Caco-2 (cell line): ENCODE measurements at regions of chr4 and their contacts with region 1.

Region 1: GRCh38 chr4:89434364-89434988 is 126.9 kb upstream of the GPRIN3 start:
- DNase-seq: peak in 1 of 2 experiments; percentile 2
- H3K4me3 ChIP-seq: no peak overlapping the region
- H3K4me3 Mint-ChIP-seq: no peak overlapping the region
- H3K27ac Mint-ChIP-seq: no peak overlapping the region
- H3K4me1 ChIP-seq: no peaks in the 10 kb centered on the region
- H3K4me1 Mint-ChIP-seq: no peaks in the 10 kb centered on the region
- H3K27me3 ChIP-seq: no peaks in the 10 kb centered on the region
- H3K27me3 Mint-ChIP-seq: peaks cover 12% of the 10 kb centered on the region
- CTCF ChIP-seq: peak; percentile 57 to 62

Region 2: GRCh38 chr4:89158884-89159503 is 275.5 kb before region 1 on chr4:
- CTCF ChIA-PET with region 1: no interaction called
- POLR2A ChIA-PET with region 1: no interaction called
- intact Hi-C with region 1: loop called (anchors 1 kb)
- DNase-seq: peak in 1 of 2 experiments; percentile 41
- H3K4me3 ChIP-seq: no peak overlapping the region
- H3K4me3 Mint-ChIP-seq: no peak overlapping the region
- H3K27ac Mint-ChIP-seq: no peak overlapping the region
- H3K4me1 ChIP-seq: no peaks in the 10 kb centered on the region
- H3K4me1 Mint-ChIP-seq: peaks cover 6% of the 10 kb centered on the region
- H3K27me3 ChIP-seq: no peaks in the 10 kb centered on the region
- H3K27me3 Mint-ChIP-seq: no peaks in the 10 kb centered on the region
- CTCF ChIP-seq: peak; percentile 64 to 69

Region 3: GRCh38 chr4:89164400-89164799 is 270.1 kb before region 1 on chr4:
- CTCF ChIA-PET with region 1: no interaction called
- POLR2A ChIA-PET with region 1: no interaction called
- intact Hi-C with region 1: loop called (anchors 1 kb)
- DNase-seq: no peak
- H3K4me3 ChIP-seq: no peak overlapping the region
- H3K4me3 Mint-ChIP-seq: no peak overlapping the region
- H3K27ac Mint-ChIP-seq: no peak overlapping the region
- H3K4me1 ChIP-seq: no peaks in the 10 kb centered on the region
- H3K4me1 Mint-ChIP-seq: no peaks in the 10 kb centered on the region
- H3K27me3 ChIP-seq: no peaks in the 10 kb centered on the region
- H3K27me3 Mint-ChIP-seq: no peaks in the 10 kb centered on the region
- CTCF ChIP-seq: no peak

Region 4: GRCh38 chr4:89226665-89227574 is 207.6 kb before region 1 on chr4:
- CTCF ChIA-PET with region 1: no interaction called
- POLR2A ChIA-PET with region 1: no interaction called
- intact Hi-C with region 1: loop called (anchors 1 kb)
- DNase-seq: peak; percentile 77 to 78
- H3K4me3 ChIP-seq: no peak overlapping the region
- H3K4me3 Mint-ChIP-seq: no peak overlapping the region
- H3K27ac Mint-ChIP-seq: no peak overlapping the region
- H3K4me1 ChIP-seq: peaks cover 7% of the 10 kb centered on the region; the same call in 1 of the 2 replicates
- H3K4me1 Mint-ChIP-seq: no peaks in the 10 kb centered on the region
- H3K27me3 ChIP-seq: no peaks in the 10 kb centered on the region
- H3K27me3 Mint-ChIP-seq: no peaks in the 10 kb centered on the region
- CTCF ChIP-seq: peak; percentile 43 to 70

Region 5: GRCh38 chr4:89242864-89243732 is 191.4 kb before region 1 on chr4:
- CTCF ChIA-PET with region 1: no interaction called
- POLR2A ChIA-PET with region 1: no interaction called
- intact Hi-C with region 1: no loop called
- DNase-seq: no peak
- H3K4me3 ChIP-seq: no peak overlapping the region
- H3K4me3 Mint-ChIP-seq: no peak overlapping the region
- H3K27ac Mint-ChIP-seq: no peak overlapping the region
- H3K4me1 ChIP-seq: no peaks in the 10 kb centered on the region
- H3K4me1 Mint-ChIP-seq: no peaks in the 10 kb centered on the region
- H3K27me3 ChIP-seq: no peaks in the 10 kb centered on the region
- H3K27me3 Mint-ChIP-seq: no peaks in the 10 kb centered on the region
- CTCF ChIP-seq: no peak

Region 6: DNA sequence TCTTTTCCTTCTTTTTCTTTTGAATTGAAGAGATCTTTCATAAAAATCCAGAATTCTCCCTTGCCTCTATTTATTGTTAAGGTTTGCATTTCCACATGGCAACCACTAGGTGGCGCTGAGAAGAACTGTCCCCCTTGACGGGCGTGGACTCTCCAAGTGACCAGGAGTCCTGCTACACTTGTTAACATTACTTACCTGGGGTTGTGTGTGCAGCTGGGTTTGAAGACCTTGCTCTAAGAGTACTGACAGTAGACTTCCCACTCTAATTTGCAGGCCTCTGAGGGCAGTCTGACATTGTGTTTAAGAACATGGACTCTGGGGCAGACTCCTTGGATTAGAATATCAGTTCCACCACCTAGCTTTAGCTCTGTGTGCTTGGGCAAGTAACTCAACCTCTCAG is 179.6 kb before region 1 on chr4:
- CTCF ChIA-PET with region 1: no interaction called
- POLR2A ChIA-PET with region 1: no interaction called
- intact Hi-C with region 1: loop called (anchors 10 kb)
- DNase-seq: peak in 1 of 2 experiments; percentile 29
- H3K4me3 ChIP-seq: no peak overlapping the region
- H3K4me3 Mint-ChIP-seq: no peak overlapping the region
- H3K27ac Mint-ChIP-seq: no peak overlapping the region
- H3K4me1 ChIP-seq: no peaks in the 10 kb centered on the region
- H3K4me1 Mint-ChIP-seq: no peaks in the 10 kb centered on the region
- H3K27me3 ChIP-seq: no peaks in the 10 kb centered on the region
- H3K27me3 Mint-ChIP-seq: peaks cover 7% of the 10 kb centered on the region
- CTCF ChIP-seq: peak; percentile 70 to 72

Region 7: GRCh38 chr4:89410687-89411086 is 23.8 kb before region 1 on chr4:
- CTCF ChIA-PET with region 1: no interaction called
- POLR2A ChIA-PET with region 1: no interaction called
- intact Hi-C with region 1: no loop called
- DNase-seq: no peak
- H3K4me3 ChIP-seq: no peak overlapping the region
- H3K4me3 Mint-ChIP-seq: no peak overlapping the region
- H3K27ac Mint-ChIP-seq: no peak overlapping the region
- H3K4me1 ChIP-seq: no peaks in the 10 kb centered on the region
- H3K4me1 Mint-ChIP-seq: no peaks in the 10 kb centered on the region
- H3K27me3 ChIP-seq: no peaks in the 10 kb centered on the region
- H3K27me3 Mint-ChIP-seq: peaks cover 8% of the 10 kb centered on the region
- CTCF ChIP-seq: no peak

Region 8: DNA sequence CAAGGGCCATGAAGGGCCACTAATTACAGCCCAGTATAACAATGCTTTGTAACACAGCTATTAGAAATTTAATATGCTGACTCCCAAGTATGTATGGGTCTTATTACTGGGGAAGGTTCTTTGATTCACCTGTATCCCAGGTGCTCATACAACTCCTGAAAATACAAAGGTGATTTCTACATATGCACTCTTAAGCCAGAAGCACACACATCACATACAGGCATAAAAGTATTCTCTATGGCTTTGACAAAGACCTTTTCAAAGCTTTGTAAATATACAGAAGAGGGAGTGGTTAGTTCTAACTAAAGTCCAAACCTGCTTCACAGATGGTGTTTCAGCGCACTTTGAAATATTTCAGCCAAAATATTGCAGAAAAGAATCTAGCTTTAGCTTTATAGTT is 211.0 kb after region 1 on chr4:
- CTCF ChIA-PET with region 1: no interaction called
- POLR2A ChIA-PET with region 1: no interaction called
- intact Hi-C with region 1: no loop called
- DNase-seq: peak in 1 of 2 experiments; percentile 24
- H3K4me3 ChIP-seq: no peak overlapping the region
- H3K4me3 Mint-ChIP-seq: no peak overlapping the region
- H3K27ac Mint-ChIP-seq: no peak overlapping the region
- H3K4me1 ChIP-seq: peaks cover 5% of the 10 kb centered on the region; the same call in 1 of the 2 replicates
- H3K4me1 Mint-ChIP-seq: no peaks in the 10 kb centered on the region
- H3K27me3 ChIP-seq: no peaks in the 10 kb centered on the region
- H3K27me3 Mint-ChIP-seq: no peaks in the 10 kb centered on the region
- CTCF ChIP-seq: no peak

Region 9: DNA sequence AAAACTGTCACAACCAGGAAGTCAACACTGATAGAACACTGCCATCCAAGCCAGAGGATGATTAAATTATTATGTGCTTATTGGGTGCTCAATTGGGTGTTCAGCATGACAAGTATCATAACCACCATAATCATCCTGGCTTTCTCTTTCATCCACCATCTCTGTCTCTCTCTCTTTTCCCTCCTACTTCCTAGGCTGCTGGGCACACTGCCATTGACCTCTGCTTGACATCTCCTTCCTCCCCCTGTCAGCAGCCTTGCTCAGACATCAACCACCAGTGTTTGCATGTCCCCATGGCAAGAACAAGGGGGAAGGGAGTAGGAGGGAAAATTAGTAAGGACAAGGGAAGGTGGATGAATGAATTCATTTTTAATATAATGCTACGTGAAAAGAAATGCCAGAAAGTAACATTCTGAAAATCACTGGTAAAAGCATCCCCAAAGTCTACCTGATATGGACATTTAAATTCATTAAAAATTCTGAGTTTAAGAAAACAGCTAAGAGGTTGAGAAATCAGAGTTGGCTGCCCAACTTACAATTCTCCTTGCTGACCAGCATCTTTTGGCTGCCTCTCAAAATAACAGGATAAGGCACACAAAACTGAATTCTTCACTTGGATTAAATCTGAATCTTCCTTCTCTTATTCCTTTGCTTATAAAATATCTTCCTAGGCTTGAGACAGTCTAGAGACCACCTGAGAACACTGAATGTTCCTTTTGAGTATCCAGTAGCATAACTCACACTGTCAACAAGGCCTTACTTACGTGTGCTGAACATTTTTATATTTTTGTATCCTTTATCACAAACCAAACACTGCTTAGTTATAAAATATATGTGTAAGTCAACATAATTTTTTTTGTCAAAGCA is 354.0 kb after region 1 on chr4:
- CTCF ChIA-PET with region 1: no interaction called
- POLR2A ChIA-PET with region 1: no interaction called
- intact Hi-C with region 1: no loop called
- DNase-seq: no peak
- H3K4me3 ChIP-seq: no peak overlapping the region
- H3K4me3 Mint-ChIP-seq: no peak overlapping the region
- H3K27ac Mint-ChIP-seq: no peak overlapping the region
- H3K4me1 ChIP-seq: no peaks in the 10 kb centered on the region
- H3K4me1 Mint-ChIP-seq: no peaks in the 10 kb centered on the region
- H3K27me3 ChIP-seq: no peaks in the 10 kb centered on the region
- H3K27me3 Mint-ChIP-seq: peaks cover 2% of the 10 kb centered on the region
- CTCF ChIP-seq: no peak